PC-9 (cell line): ENCODE measurements at regions of chrX and their contacts with region 1.

Region 1: DNA sequence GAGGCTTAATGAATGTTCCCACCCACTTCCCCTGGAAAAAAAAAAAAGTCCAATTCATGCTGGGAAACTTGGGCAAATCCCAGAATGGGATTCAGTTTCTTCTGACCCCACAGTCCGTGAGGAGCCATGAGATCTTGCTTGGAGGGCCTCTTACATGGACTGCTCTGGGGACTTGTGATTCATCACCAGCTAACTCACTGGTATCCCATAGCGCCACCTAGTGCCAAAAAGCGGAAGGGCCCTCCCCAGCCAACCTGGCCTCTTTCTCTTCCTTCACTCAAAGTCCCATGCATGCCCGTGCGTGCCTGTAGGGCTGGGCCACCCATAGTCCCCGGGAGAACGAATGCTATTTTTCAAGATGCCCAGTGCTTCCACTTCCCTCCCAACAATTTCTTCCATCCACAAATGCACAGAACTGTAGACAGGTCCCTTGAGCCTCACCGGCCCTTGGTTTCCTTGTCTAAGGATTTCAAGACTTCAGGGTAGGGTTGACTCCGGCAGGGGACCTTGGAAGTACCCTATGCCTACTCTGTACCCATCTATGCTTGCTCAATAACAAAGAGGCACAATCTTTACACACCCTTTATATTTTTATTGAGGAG is 5.1 kb downstream of the RTL5 start:
- DNase-seq: peak in 1 of 2 experiments; percentile 73
- H3K4me3 ChIP-seq: no peak overlapping the region
- H3K27ac ChIP-seq: no peak overlapping the region
- H3K4me1 ChIP-seq: no peaks in the 10 kb centered on the region
- H3K27me3 ChIP-seq: peaks cover 17% of the 10 kb centered on the region; the same call in 1 of the 2 replicates
- CTCF ChIP-seq: peak; percentile 81

Region 2: DNA sequence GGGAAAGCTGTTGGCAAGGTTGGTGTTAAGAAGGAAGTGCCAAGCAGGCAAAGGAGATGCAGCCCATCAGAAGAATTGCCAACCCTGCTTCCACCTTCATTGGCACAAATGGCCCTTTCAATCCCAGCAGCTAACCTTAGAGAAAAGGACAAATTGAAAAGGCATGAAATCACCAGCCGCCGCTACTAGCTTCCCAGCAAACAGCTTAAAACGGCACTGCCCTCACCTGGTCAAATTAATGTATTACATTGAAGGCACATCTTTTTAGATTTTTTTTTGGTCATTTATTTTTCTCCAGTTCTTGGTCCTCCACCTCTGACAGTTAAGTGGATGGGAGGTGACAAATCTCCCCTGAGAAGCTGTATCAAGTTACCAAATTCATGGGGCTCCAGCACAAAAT is 267.0 kb before region 1 on chrX:
- CTCF ChIA-PET with region 1: no interaction called
- POLR2A ChIA-PET with region 1: no interaction called
- intact Hi-C with region 1: loop called (anchors 5 kb)
- DNase-seq: no peak
- H3K4me3 ChIP-seq: no peak overlapping the region
- H3K27ac ChIP-seq: no peak overlapping the region
- H3K4me1 ChIP-seq: no peaks in the 10 kb centered on the region
- H3K27me3 ChIP-seq: peaks cover 34% of the 10 kb centered on the region
- CTCF ChIP-seq: peak; percentile 63

Region 3: GRCh38 chrX:71998836-71999509 is 127.7 kb before region 1 on chrX:
- CTCF ChIA-PET with region 1: interaction called, 4 read pairs
- POLR2A ChIA-PET with region 1: no interaction called
- intact Hi-C with region 1: loop called (anchors 1 kb)
- DNase-seq: peak in 1 of 2 experiments; percentile 10
- H3K4me3 ChIP-seq: no peak overlapping the region
- H3K27ac ChIP-seq: no peak overlapping the region
- H3K4me1 ChIP-seq: no peaks in the 10 kb centered on the region
- H3K27me3 ChIP-seq: peaks cover 22% of the 10 kb centered on the region; the same call in 1 of the 2 replicates
- CTCF ChIP-seq: peak; percentile 75

Region 4: GRCh38 chrX:72018277-72019112 is 108.1 kb before region 1 on chrX:
- CTCF ChIA-PET with region 1: no interaction called
- POLR2A ChIA-PET with region 1: no interaction called
- intact Hi-C with region 1: loop called (anchors 5 kb)
- DNase-seq: peak; percentile 66 to 85
- H3K4me3 ChIP-seq: peak overlapping the region; percentile 48; the same call in 1 of the 2 replicates
- H3K27ac ChIP-seq: no peak overlapping the region
- H3K4me1 ChIP-seq: no peaks in the 10 kb centered on the region; the same call in 1 of the 2 replicates
- H3K27me3 ChIP-seq: peaks cover 10% of the 10 kb centered on the region
- CTCF ChIP-seq: peak; percentile 65

Region 5: DNA sequence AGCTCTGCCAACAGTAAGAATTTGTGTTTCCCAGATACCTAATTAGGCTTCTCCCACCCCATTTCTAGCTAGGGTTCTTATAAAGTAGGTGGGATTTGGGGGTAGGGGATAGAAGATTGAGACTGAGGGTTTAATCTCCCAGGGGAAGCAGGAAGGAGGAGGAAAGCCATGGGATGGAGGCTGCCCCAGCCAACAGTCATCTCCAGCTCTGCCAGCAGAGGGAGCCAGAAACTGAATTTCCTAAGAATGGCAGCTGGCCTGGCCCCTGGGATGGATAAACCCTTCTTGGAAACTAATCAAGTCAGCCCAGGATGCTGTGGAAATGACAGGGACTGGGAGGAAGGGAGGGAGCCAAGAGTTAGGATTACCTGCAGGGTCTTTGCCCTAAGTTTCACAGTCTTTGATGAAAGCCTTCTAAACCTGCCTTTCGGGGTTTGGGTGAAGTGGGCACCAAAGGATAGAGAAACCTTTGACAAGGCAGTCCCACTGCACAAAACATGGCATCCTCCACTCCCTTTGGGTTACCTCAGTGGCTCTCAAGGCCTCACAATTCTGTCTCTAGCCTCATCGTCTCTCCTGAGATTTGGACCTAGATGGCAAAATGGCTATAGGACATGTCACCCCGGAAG is 118.9 kb after region 1 on chrX:
- CTCF ChIA-PET with region 1: no interaction called
- POLR2A ChIA-PET with region 1: no interaction called
- intact Hi-C with region 1: no loop called
- DNase-seq: peak in 1 of 2 experiments; percentile 56
- H3K4me3 ChIP-seq: no peak overlapping the region
- H3K27ac ChIP-seq: no peak overlapping the region
- H3K4me1 ChIP-seq: no peaks in the 10 kb centered on the region
- H3K27me3 ChIP-seq: no peaks in the 10 kb centered on the region
- CTCF ChIP-seq: peak; percentile 82